Aorta (tissue), 5 donors: ENCODE measurements at regions of chr1 and their contacts with region 1.

Region 1: GRCh38 chr1:17236779-17237560 is 11.9 kb upstream of the PADI3 start:
- DNase-seq: peak; percentile 91 to 96
- ATAC-seq: peak; percentile 70
- H3K4me3 ChIP-seq: no peak overlapping the region
- H3K27ac ChIP-seq: no peak overlapping the region
- H3K4me1 ChIP-seq: no peaks in the 10 kb centered on the region
- H3K27me3 ChIP-seq: no peaks in the 10 kb centered on the region

Region 2: DNA sequence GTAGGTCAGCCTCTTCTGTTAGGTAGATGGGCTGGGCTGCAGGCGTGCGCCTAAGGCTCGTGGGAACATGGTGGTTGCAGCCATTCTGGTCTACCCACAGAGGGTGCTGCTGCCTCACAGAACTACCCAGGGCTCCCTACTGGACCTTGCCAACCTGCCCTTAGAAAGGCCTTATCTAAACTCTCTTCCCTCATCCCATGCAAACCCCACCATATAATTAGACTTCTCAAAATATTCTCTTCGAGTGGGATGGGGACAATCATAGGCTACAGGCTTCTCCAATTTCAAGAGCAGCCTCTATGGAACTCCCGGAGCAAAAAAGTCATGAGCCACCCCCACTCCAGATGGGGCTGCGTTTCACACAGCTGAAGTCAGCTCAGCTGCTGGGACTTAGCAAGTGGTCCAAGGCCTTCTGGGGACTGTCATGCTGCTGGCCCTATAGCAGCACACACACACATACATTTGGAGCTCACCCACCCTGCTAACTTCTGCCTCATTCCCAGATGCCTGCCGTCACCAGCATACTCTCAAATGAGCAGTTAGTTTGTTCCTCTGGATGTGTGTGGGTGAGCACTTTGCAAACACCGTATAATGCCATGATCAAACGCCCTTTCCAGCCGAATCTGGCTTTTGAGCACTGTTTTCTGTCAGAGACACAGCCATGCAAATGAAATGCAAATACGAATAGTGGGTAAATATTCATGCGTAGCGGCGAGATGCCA is 177.1 kb before region 1 on chr1:
- intact Hi-C with region 1: loop called in 1 of 2 experiments (anchors 5 kb)
- DNase-seq: peak; percentile 62 to 79
- ATAC-seq: peak; percentile 79
- H3K4me3 ChIP-seq: no peak overlapping the region
- H3K27ac ChIP-seq: no peak overlapping the region
- H3K4me1 ChIP-seq: no peaks in the 10 kb centered on the region
- H3K27me3 ChIP-seq: peaks cover 0 to 1% of the 10 kb centered on the region in 2 donors

Region 3: GRCh38 chr1:17125756-17126237 is 111.2 kb before region 1 on chr1:
- intact Hi-C with region 1: loop called (anchors 1 kb)
- DNase-seq: peak; percentile 92 to 97
- ATAC-seq: peak; percentile 91
- H3K4me3 ChIP-seq: no peak overlapping the region
- H3K27ac ChIP-seq: no peak overlapping the region
- H3K4me1 ChIP-seq: no peaks in the 10 kb centered on the region
- H3K27me3 ChIP-seq: no peaks in the 10 kb centered on the region

Region 4: GRCh38 chr1:17190010-17190995 is 46.7 kb before region 1 on chr1:
- intact Hi-C with region 1: no loop called
- DNase-seq: no peak
- ATAC-seq: no peak
- H3K4me3 ChIP-seq: no peak overlapping the region
- H3K27ac ChIP-seq: no peak overlapping the region
- H3K4me1 ChIP-seq: no peaks in the 10 kb centered on the region
- H3K27me3 ChIP-seq: no peaks in the 10 kb centered on the region

Region 5: GRCh38 chr1:17653728-17654351 is 416.9 kb after region 1 on chr1:
- intact Hi-C with region 1: no loop called
- DNase-seq: peak in 1 of 2 donors; percentile 83
- ATAC-seq: no peak
- H3K4me3 ChIP-seq: no peak overlapping the region
- H3K27ac ChIP-seq: peak overlapping the region; percentile 6 to 49
- H3K4me1 ChIP-seq: no peaks in the 10 kb centered on the region
- H3K27me3 ChIP-seq: no peaks in the 10 kb centered on the region